Testis (tissue), 5 donors: ENCODE measurements at regions of chr2 and their contacts with region 1.

Region 1: GRCh38 chr2:61993444-61994024 is 88.1 kb downstream of the COMMD1 start:
- DNase-seq: peak; percentile 49
- H3K4me3 ChIP-seq: no peak overlapping the region
- H3K27ac ChIP-seq: no peak overlapping the region
- H3K4me1 ChIP-seq: no peaks in the 10 kb centered on the region
- H3K27me3 ChIP-seq: no peaks in the 10 kb centered on the region
- CTCF ChIP-seq: peak; percentile 33 to 38 (median 37)
- POLR2A ChIP-seq: no peak

Region 2: GRCh38 chr2:62050456-62051045 is 57.0 kb after region 1 on chr2:
- intact Hi-C with region 1: no loop called
- DNase-seq: no peak
- H3K4me3 ChIP-seq: no peak overlapping the region
- H3K27ac ChIP-seq: no peak overlapping the region
- H3K4me1 ChIP-seq: no peaks in the 10 kb centered on the region
- H3K27me3 ChIP-seq: no peaks in the 10 kb centered on the region
- CTCF ChIP-seq: no peak
- POLR2A ChIP-seq: no peak

Region 3: GRCh38 chr2:62415019-62415431 is 421.5 kb after region 1 on chr2:
- intact Hi-C with region 1: loop called (anchors 10 kb)
- DNase-seq: no peak
- H3K4me3 ChIP-seq: no peak overlapping the region
- H3K27ac ChIP-seq: no peak overlapping the region
- H3K4me1 ChIP-seq: peaks cover 19% of the 10 kb centered on the region
- H3K27me3 ChIP-seq: no peaks in the 10 kb centered on the region
- CTCF ChIP-seq: no peak
- POLR2A ChIP-seq: no peak